ENCODE measurements at regions of chr2 and their contacts with region 1.

Region 1: DNA sequence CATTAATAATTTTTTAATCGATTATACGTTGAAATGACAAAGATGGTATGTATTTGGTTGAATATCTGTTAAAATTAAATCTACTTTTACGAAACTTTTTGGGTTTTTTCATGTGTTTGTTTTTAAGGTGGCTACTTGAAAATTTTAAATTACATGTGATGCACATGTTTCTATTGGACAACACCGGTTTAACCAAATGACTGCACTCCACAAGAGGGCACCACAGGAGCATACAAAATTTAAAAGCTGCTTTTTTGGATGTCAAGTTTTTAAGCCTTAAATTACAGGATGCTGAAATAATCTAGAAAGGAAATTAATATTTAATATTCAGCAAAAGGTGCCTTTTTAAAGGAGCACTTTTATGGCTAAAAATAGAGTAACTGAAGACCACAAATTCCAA is 98.7 kb downstream of the ACVR1 start:
- DNase-seq: peak; percentile 39
- H3K4me3 ChIP-seq: no peak overlapping the region
- H3K27ac ChIP-seq: no peak overlapping the region
- H3K4me1 ChIP-seq: no peaks in the 10 kb centered on the region; a peak in 2 of 4 replicates
- H3K27me3 ChIP-seq: no peaks in the 10 kb centered on the region
- CTCF ChIP-seq: peak; percentile 92
- EP300 ChIP-seq: no peak
- RAD21 ChIP-seq: peak; percentile 89

Region 2: GRCh38 chr2:157603198-157603597 is 174.2 kb before region 1 on chr2:
- CTCF ChIA-PET with region 1: no interaction called
- POLR2A ChIA-PET with region 1: no interaction called
- DNase-seq: no peak
- H3K4me3 ChIP-seq: no peak overlapping the region
- H3K27ac ChIP-seq: no peak overlapping the region
- H3K4me1 ChIP-seq: no peaks in the 10 kb centered on the region
- H3K27me3 ChIP-seq: no peaks in the 10 kb centered on the region
- CTCF ChIP-seq: no peak
- EP300 ChIP-seq: no peak
- RAD21 ChIP-seq: no peak

Region 3: DNA sequence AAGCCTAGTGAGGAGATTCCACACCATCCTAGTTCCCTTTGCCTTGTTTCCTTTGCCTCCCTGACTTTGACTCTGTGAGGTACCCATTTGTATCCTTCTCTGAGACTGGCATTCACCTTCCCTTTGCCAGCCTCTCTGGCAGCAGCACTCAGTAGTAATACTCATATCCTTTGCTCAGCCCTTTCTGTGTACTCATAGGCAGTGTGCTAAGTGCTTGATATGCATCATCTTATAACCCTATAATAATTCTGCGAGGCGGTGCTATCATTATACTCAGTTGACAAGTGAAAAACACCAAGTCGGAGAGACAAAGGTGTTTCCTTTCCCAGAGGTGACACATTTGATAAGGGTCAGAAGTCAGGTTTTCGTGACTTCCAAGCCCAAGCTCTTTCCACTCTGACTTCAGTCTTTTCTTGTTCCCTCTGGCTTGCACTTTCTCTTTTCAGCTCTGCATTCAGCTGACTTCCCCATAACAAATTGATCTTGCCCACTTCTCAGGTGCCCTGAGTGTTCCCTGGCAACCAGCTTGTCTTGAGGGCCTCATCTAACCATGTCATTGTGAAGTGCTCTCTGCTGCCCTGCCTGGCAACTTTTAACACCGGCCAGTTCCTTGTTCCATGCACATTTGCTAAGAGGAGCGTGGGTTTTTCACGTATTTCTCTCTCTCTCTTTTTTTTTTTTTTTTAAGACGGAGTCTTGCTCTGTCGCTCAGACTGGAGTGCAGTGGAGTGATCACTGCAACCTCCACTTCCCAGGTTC is 229.7 kb after region 1 on chr2:
- CTCF ChIA-PET with region 1: interaction called, 15 read pairs
- POLR2A ChIA-PET with region 1: no interaction called
- DNase-seq: no peak
- H3K4me3 ChIP-seq: no peak overlapping the region
- H3K27ac ChIP-seq: no peak overlapping the region
- H3K4me1 ChIP-seq: peaks cover 4 to 10% of the 10 kb centered on the region in 2 experiments; a peak in 3 of 4 replicates
- H3K27me3 ChIP-seq: no peaks in the 10 kb centered on the region
- CTCF ChIP-seq: no peak
- EP300 ChIP-seq: no peak
- RAD21 ChIP-seq: no peak

Region 4: GRCh38 chr2:158414538-158414937 is 637.1 kb after region 1 on chr2:
- CTCF ChIA-PET with region 1: no interaction called
- POLR2A ChIA-PET with region 1: no interaction called
- DNase-seq: no peak
- H3K4me3 ChIP-seq: no peak overlapping the region
- H3K27ac ChIP-seq: no peak overlapping the region; a peak in 1 of 4 replicates
- H3K4me1 ChIP-seq: peaks cover 0 to 4% of the 10 kb centered on the region in 2 experiments; a peak in 2 of 4 replicates
- H3K27me3 ChIP-seq: no peaks in the 10 kb centered on the region
- CTCF ChIP-seq: no peak
- EP300 ChIP-seq: no peak
- RAD21 ChIP-seq: no peak

Measured in SK-N-SH (cell line).